GM10248 (cell line): ENCODE measurements at regions of chr5 and their contacts with region 1.

Region 1: DNA sequence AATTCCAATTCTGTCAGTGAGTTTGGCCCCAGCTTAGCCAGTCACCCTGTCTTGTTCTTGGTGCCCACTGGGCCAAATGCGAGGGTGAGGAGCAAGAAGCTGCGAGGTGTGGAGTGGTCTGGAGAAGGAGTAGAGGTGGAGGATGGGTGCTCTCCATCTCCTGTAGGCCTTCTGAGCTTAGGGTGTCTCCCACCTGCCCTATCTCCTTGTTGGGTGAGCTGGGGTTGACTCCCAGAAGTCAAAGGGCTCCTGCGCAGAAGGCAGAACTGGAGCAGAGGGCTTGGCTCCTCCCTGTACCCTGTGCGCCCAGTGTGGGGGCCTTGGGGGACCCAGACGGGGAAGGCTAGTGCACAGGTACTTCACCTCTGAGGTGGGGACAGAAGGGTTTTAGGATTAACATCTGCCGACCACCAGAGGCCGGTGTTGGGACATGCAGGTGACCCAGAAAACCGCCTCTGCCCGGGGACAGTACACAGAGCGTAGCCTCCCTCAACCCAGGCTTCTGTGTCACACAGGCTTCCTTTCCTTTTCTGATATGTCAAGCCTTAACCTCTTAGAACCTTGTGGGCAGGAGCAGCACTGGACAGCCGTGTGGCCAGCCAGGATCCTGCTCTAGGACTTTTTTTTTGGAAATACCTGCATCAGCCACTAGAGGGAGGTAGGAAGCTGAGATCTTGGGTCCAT is 16.9 kb downstream of the IL5 start:
- DNase-seq: peak; percentile 61
- CTCF ChIP-seq: peak; percentile 64

Region 2: GRCh38 chr5:132386644-132387286 is 139.7 kb before region 1 on chr5:
- CTCF ChIA-PET with region 1: interaction called, 24 read pairs
- POLR2A ChIA-PET with region 1: no interaction called
- DNase-seq: peak; percentile 87
- CTCF ChIP-seq: peak; percentile 89

Region 3: GRCh38 chr5:132506094-132506692 is 20.2 kb before region 1 on chr5:
- CTCF ChIA-PET with region 1: interaction called, 47 read pairs
- POLR2A ChIA-PET with region 1: no interaction called
- DNase-seq: peak; percentile 62
- CTCF ChIP-seq: peak; percentile 74

Region 4: DNA sequence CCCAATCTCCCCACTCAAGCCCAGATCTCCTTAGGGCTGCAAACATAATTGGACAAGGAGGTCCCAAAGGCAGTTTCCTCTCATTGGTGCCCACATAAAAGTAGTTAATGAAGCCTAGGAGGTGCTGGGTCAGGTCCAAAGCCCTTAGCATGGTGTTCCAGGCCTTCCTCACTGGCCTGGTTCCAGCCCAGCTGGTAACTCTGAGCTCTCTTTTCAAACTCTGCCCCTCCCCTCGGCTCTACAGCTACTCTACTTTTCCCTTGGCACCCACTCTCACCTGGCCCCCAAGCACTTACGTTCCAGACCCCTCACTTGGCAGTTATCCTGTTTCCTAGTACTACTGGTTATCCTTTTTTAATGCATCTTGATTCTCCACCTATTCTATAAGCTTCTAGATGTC is 240.7 kb after region 1 on chr5:
- CTCF ChIA-PET with region 1: no interaction called
- POLR2A ChIA-PET with region 1: no interaction called
- DNase-seq: no peak
- CTCF ChIP-seq: no peak

Region 5: GRCh38 chr5:132829742-132830435 is 303.5 kb after region 1 on chr5:
- CTCF ChIA-PET with region 1: interaction called, 13 read pairs
- POLR2A ChIA-PET with region 1: no interaction called
- DNase-seq: peak; percentile 90
- CTCF ChIP-seq: peak; percentile 92

Region 6: DNA sequence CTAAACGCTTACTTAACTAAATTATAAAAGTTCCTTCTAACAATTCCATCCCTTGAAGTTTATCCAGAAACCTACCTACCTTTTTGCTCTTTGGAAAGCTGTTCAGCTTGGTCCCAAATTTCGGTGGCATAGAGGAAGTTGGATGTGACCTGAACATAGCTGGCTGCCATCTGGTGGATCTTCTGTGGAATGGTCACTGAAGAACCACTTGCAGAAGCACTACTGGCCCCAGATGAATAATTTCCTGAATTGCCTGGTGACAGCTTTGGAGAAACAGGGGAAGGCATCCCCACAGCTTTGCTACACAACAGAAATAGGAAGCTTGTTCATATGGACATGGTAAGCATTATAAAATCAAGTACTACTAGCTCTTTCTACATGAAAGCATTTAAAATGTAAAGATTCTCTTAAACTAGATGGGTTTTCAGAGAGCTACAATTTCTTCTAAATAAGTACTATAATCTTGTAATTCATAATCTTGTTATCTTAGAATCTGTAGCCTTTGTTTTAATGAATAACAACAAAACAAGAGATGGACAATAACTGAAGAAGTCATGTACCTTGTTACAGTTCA is 356.9 kb after region 1 on chr5:
- CTCF ChIA-PET with region 1: interaction called, 11 read pairs
- POLR2A ChIA-PET with region 1: no interaction called
- DNase-seq: peak; percentile 39
- CTCF ChIP-seq: peak; percentile 60